Activated naive CD4-positive, alpha-beta T cell treated with anti-CD3 and anti-CD28 coated beads for 36 hours (primary cell): ENCODE measurements at regions of chr4 and their contacts with region 1.

Region 1: GRCh38 chr4:73258686-73259570 is at the start of gene ANKRD17:
- DNase-seq: peak; percentile 93
- H3K4me3 Mint-ChIP-seq: peak within 1 kb of the TSS; percentile 98
- H3K27ac Mint-ChIP-seq: peak within 1 kb of the TSS; percentile 100
- H3K4me1 Mint-ChIP-seq: peaks cover 50% of the 10 kb centered on the region
- H3K27me3 Mint-ChIP-seq: no peaks in the 10 kb centered on the region
- total RNA-seq, gene ANKRD17: 42.3 to 44.2 TPM

Region 2: GRCh38 chr4:72567821-72568675 is 690.9 kb before region 1 on chr4:
- CTCF ChIA-PET with region 1: no interaction called
- intact Hi-C with region 1: loop called (anchors 2 kb)
- DNase-seq: peak; percentile 39
- H3K4me3 Mint-ChIP-seq: peak overlapping the region; percentile 46
- H3K27ac Mint-ChIP-seq: no peak overlapping the region
- H3K4me1 Mint-ChIP-seq: peaks cover 22% of the 10 kb centered on the region
- H3K27me3 Mint-ChIP-seq: peaks cover 53% of the 10 kb centered on the region

Region 3: GRCh38 chr4:73036123-73036522 is 222.8 kb before region 1 on chr4:
- CTCF ChIA-PET with region 1: interaction called, 5 read pairs
- intact Hi-C with region 1: loop called (anchors 1 kb)
- DNase-seq: no peak
- H3K4me3 Mint-ChIP-seq: no peak overlapping the region
- H3K27ac Mint-ChIP-seq: no peak overlapping the region
- H3K4me1 Mint-ChIP-seq: peaks cover 13% of the 10 kb centered on the region
- H3K27me3 Mint-ChIP-seq: peaks cover 2% of the 10 kb centered on the region

Region 4: GRCh38 chr4:73103799-73104503 is 155.0 kb before region 1 on chr4:
- CTCF ChIA-PET with region 1: interaction called, 13 read pairs
- intact Hi-C with region 1: no loop called
- DNase-seq: no peak
- H3K4me3 Mint-ChIP-seq: no peak overlapping the region
- H3K27ac Mint-ChIP-seq: peak overlapping the region; percentile 73
- H3K4me1 Mint-ChIP-seq: peaks cover 25% of the 10 kb centered on the region
- H3K27me3 Mint-ChIP-seq: no peaks in the 10 kb centered on the region

Region 5: GRCh38 chr4:73222466-73223257 is 36.3 kb before region 1 on chr4:
- CTCF ChIA-PET with region 1: interaction called, 10 read pairs
- intact Hi-C with region 1: loop called (anchors 1 kb)
- DNase-seq: peak; percentile 75
- H3K4me3 Mint-ChIP-seq: no peak overlapping the region
- H3K27ac Mint-ChIP-seq: no peak overlapping the region
- H3K4me1 Mint-ChIP-seq: peaks cover 36% of the 10 kb centered on the region
- H3K27me3 Mint-ChIP-seq: no peaks in the 10 kb centered on the region

Region 6: GRCh38 chr4:73446336-73446938 is 187.5 kb after region 1 on chr4:
- CTCF ChIA-PET with region 1: interaction called, 5 read pairs
- intact Hi-C with region 1: loop called (anchors 1 kb)
- DNase-seq: peak; percentile 4
- H3K4me3 Mint-ChIP-seq: no peak overlapping the region
- H3K27ac Mint-ChIP-seq: no peak overlapping the region
- H3K4me1 Mint-ChIP-seq: no peaks in the 10 kb centered on the region
- H3K27me3 Mint-ChIP-seq: peaks cover 11% of the 10 kb centered on the region